ENCODE measurements at regions of chr6 and their contacts with region 1.

Region 1: GRCh38 chr6:111483736-111484632 is 966 bp upstream of the REV3L start:
- DNase-seq: peak; percentile 96
- H3K4me3 ChIP-seq: peak overlapping the region; percentile 62 to 85 (median 67)
- H3K27ac ChIP-seq: peak overlapping the region; percentile 97
- H3K4me1 ChIP-seq: peaks cover 24% of the 10 kb centered on the region
- H3K27me3 ChIP-seq: no peaks in the 10 kb centered on the region
- CTCF ChIP-seq: no peak
- POLR2A ChIP-seq: peak; percentile 93

Region 2: GRCh38 chr6:110682460-110682853 is 801.5 kb before region 1 on chr6:
- CTCF ChIA-PET with region 1: no interaction called
- POLR2A ChIA-PET with region 1: interaction called, 11 read pairs
- dilution Hi-C with region 1: no loop called
- intact Hi-C with region 1: no loop called
- DNase-seq: peak; percentile 84
- H3K4me3 ChIP-seq: no peak overlapping the region
- H3K27ac ChIP-seq: no peak overlapping the region
- H3K4me1 ChIP-seq: peaks cover 6% of the 10 kb centered on the region
- H3K27me3 ChIP-seq: peaks cover 0 to 1% of the 10 kb centered on the region in 2 experiments
- CTCF ChIP-seq: peak; percentile 37 to 54
- POLR2A ChIP-seq: no peak

Region 3: DNA sequence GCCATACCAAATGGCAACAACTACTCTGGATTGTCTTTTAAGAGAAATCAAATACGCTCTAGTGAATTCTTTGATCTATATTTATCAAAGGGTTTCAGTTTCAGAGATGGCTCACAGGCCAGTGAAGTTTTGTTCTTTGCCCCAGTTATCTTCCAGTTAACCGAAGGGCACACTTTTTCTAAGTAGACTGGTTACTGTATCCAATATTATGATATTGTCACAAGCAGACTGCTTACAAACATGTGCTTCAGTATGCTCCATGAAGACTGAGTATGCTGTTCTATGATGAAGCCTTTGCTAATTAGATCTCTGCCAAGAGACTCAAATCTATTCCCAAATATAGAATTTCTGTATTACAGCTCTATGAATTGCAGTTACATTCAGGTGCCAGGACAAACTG is 182.0 kb before region 1 on chr6:
- CTCF ChIA-PET with region 1: interaction called, 3 read pairs
- POLR2A ChIA-PET with region 1: no interaction called
- dilution Hi-C with region 1: no loop called
- intact Hi-C with region 1: loop called (anchors 5 kb)
- DNase-seq: no peak
- H3K4me3 ChIP-seq: no peak overlapping the region
- H3K27ac ChIP-seq: no peak overlapping the region
- H3K4me1 ChIP-seq: no peaks in the 10 kb centered on the region
- H3K27me3 ChIP-seq: no peaks in the 10 kb centered on the region
- CTCF ChIP-seq: no peak
- POLR2A ChIP-seq: no peak

Region 4: DNA sequence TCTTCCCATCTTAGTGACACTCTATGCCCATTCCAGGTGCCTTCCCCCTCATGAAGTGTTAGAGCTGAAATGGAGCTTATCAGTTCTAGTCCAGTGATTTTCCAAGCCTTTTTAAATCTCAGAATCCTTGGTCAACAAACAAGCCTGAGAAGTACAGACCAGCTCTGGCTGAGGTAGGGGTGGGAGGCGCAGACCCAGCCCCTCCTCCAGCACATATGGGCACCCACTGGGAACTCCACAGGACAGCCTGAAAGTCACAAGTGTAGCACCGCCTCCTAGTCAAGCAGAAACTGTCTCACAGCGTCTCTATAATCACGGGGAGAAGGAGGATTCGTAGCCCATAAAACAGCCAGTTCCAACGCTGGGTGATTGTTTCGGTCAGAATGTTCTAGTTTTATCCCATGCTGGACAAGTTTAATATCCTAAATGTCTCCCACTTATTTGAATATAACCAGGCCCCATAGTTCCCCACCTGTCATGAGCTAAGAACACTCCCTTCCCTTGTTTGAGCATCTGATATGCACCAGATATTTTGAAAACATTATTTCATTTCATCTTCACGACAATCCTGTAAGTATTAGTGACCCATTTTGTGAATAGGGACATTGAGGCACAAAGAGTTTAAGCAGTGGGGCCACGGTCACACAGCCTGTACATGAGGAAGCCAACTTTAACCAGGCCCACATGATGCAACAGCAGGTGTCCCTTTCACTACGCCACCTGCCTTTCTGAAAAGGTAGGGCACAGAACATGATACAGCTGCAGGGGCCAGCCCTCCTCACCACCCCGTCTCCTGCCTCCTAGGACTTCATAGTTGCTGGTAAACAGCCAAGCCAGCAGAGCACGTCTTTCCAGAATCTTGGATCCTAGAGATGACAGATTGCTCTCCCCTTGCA is 81.6 kb after region 1 on chr6:
- CTCF ChIA-PET with region 1: interaction called, 6 read pairs
- POLR2A ChIA-PET with region 1: interaction called, 3 read pairs
- dilution Hi-C with region 1: no loop called
- intact Hi-C with region 1: loop called (anchors 1 kb)
- DNase-seq: no peak
- H3K4me3 ChIP-seq: no peak overlapping the region
- H3K27ac ChIP-seq: peak overlapping the region; percentile 94
- H3K4me1 ChIP-seq: peaks cover 52% of the 10 kb centered on the region
- H3K27me3 ChIP-seq: no peaks in the 10 kb centered on the region
- CTCF ChIP-seq: no peak
- POLR2A ChIP-seq: no peak

Region 5: DNA sequence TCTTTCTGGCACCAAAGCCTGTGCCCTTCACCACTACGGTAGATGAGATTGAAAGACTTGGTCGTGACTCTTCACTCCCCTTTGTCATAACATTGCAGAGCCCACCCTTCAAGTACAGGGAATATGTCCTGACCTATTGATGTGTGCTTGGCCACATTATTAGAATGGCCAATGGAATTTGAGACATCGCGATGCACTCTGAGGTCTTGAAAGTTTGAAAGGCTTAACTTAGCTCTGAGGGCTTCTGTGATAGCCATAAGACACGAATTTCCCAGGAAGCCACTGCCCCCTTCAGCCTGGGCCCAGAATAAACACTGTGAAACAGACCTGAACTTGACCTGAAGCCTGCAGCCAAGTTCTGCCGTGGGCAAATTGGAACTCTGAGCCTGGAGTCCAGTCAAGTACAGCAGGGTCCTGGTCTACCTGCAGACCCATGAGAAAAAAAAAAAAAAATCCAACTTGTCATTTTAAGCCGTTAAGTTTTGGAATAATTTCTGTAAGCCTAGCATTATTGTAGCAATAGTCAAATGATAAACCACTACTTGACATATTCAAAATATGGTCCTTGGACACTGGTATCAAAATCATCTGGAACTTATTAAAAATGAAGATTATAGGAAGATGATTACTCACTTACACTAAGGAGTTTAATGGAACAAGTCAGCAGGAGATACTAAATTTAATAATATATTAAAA is 158.6 kb after region 1 on chr6:
- CTCF ChIA-PET with region 1: interaction called, 19 read pairs
- POLR2A ChIA-PET with region 1: no interaction called
- dilution Hi-C with region 1: no loop called
- intact Hi-C with region 1: loop called (anchors 1 kb)
- DNase-seq: peak; percentile 79
- H3K4me3 ChIP-seq: no peak overlapping the region
- H3K27ac ChIP-seq: no peak overlapping the region
- H3K4me1 ChIP-seq: no peaks in the 10 kb centered on the region
- H3K27me3 ChIP-seq: no peaks in the 10 kb centered on the region
- CTCF ChIP-seq: peak; percentile 63 to 67
- POLR2A ChIP-seq: no peak

Region 6: DNA sequence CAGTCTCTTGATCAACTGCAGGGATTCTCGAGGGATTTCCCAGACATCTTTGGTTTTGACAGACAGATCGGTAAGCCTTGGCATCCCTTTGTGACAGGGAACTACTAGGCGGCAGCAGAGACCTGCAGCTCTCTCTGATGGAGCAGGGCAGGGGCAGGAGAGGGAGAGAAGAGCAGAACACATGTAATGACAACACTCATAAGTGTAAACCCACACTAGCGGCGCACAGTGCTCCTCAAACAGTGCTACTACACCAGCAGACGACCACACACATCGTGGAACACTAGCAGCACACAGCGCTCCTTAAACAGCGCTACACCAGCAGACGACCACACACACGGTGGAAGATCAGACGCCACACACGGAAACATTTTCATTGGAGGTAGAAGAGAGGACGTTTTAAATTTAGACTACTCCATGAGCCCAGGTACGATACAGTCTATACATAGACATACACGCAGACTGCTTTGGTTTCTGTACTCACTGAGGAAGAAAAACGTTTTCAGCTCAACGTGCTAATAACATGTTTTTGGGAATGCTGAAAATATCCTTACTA is 216.2 kb after region 1 on chr6:
- CTCF ChIA-PET with region 1: no interaction called
- POLR2A ChIA-PET with region 1: no interaction called
- dilution Hi-C with region 1: no loop called
- intact Hi-C with region 1: loop called (anchors 5 kb)
- DNase-seq: no peak
- H3K4me3 ChIP-seq: no peak overlapping the region
- H3K27ac ChIP-seq: no peak overlapping the region
- H3K4me1 ChIP-seq: peaks cover 3% of the 10 kb centered on the region
- H3K27me3 ChIP-seq: no peaks in the 10 kb centered on the region
- CTCF ChIP-seq: no peak
- POLR2A ChIP-seq: no peak

Region 7: DNA sequence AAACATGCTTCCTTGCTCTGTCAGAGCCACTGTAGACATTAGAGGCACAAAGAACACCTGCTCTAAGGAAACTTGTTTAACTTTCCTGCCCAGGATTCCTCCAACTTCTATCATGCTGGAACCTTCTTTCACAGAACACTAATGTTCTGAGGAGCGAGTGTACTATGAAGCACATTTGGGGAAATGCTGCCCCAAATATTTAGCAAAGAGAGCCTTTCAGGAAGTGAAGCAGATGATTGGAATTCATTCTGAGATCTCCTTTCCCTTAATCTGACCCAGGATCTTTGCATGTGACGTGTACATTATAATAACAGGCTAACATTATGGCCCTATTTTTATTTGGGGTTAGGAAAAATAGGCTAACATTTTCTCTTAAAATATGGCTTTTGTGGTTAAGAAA is 410.3 kb after region 1 on chr6:
- CTCF ChIA-PET with region 1: no interaction called
- POLR2A ChIA-PET with region 1: no interaction called
- dilution Hi-C with region 1: no loop called
- intact Hi-C with region 1: no loop called
- DNase-seq: peak; percentile 55
- H3K4me3 ChIP-seq: no peak overlapping the region
- H3K27ac ChIP-seq: peak overlapping the region; percentile 49
- H3K4me1 ChIP-seq: peaks cover 29% of the 10 kb centered on the region
- H3K27me3 ChIP-seq: no peaks in the 10 kb centered on the region
- CTCF ChIP-seq: no peak
- POLR2A ChIP-seq: no peak

Measured in endothelial cell of umbilical vein (primary cell).